Activated T-helper 2 cell treated with anti-CD3 and anti-CD28 coated beads, Interferon-gamma antibody, Interleukin-2, Interleukin-4, amounts not matched to agents 10 μg/mL and 5 μg/mL and 100 μg/mL, durations not matched to agents 14 hours and 24 hours and 36 hours (primary cell): ENCODE measurements at regions of chr4 and their contacts with region 1.

Region 1: DNA sequence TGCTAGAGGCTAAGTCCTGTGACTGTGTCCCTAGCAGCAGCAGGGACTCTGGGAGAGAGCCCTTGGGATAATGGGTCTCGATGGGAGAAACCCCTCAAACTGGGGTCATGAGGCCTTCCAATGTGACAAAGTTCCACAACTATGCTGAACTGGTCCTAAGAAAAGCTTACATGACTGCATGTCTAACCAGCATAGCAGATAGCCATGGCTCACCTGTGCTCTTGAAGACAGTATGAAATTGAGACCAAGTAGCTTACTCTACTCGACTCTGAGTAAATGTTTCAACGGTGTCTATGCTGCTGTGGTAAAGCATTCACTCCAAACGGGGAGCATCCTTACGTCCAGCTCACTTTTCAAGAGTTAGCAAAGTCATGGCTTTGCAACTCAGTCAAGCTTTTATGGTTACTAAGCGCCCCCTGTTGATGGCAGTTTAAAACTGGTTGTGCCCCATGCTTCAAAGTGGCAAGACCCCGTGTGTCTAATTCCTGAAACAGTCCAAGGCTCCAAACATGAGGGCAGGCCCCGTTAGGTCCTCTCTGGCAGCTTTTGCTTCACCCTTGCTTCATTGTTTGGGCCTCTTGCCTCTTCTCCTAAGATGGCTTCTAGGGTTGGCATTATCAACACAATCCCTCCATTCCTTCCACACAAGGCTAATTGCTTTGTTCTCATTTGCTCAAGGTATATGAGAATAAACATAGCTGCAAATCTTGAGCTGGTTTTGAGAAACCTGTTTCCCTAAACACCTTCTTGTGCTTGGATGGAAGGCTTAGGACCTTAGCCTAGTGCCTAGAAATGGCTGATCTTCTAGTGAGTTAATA is 46.6 kb downstream of the CCNG2 start:
- DNase-seq: peak; percentile 55
- H3K4me3 Mint-ChIP-seq: no peak overlapping the region
- H3K27ac Mint-ChIP-seq: no peak overlapping the region
- H3K4me1 Mint-ChIP-seq: peaks cover 21% of the 10 kb centered on the region
- H3K27me3 Mint-ChIP-seq: peaks cover 16% of the 10 kb centered on the region

Region 2: GRCh38 chr4:76515975-76516843 is 687.4 kb before region 1 on chr4:
- intact Hi-C with region 1: loop called (anchors 10 kb)
- DNase-seq: no peak
- H3K4me3 Mint-ChIP-seq: no peak overlapping the region
- H3K27ac Mint-ChIP-seq: no peak overlapping the region
- H3K4me1 Mint-ChIP-seq: no peaks in the 10 kb centered on the region
- H3K27me3 Mint-ChIP-seq: peaks cover 5% of the 10 kb centered on the region

Region 3: DNA sequence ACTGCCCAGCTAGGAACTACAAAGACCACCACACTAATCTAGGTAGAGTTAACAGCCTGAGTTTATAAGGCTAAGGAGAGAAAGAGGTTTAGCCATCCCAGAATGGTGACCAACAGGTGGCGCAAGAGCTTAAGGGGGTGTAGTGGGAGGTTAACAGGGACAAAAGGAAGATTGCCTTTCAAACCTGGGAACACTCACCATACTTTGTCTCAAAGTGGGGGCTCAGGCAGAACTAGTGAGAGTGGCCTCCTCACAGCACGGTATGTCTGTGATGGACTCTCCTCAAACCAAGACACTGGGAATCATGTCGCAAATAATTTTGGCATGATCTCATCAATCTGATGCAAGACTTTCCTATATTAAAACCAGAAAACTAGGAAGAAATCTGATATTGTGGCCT is 151.2 kb before region 1 on chr4:
- intact Hi-C with region 1: loop called (anchors 1 kb)
- DNase-seq: peak; percentile 26
- H3K4me3 Mint-ChIP-seq: no peak overlapping the region
- H3K27ac Mint-ChIP-seq: no peak overlapping the region
- H3K4me1 Mint-ChIP-seq: peaks cover 2% of the 10 kb centered on the region
- H3K27me3 Mint-ChIP-seq: no peaks in the 10 kb centered on the region

Region 4: DNA sequence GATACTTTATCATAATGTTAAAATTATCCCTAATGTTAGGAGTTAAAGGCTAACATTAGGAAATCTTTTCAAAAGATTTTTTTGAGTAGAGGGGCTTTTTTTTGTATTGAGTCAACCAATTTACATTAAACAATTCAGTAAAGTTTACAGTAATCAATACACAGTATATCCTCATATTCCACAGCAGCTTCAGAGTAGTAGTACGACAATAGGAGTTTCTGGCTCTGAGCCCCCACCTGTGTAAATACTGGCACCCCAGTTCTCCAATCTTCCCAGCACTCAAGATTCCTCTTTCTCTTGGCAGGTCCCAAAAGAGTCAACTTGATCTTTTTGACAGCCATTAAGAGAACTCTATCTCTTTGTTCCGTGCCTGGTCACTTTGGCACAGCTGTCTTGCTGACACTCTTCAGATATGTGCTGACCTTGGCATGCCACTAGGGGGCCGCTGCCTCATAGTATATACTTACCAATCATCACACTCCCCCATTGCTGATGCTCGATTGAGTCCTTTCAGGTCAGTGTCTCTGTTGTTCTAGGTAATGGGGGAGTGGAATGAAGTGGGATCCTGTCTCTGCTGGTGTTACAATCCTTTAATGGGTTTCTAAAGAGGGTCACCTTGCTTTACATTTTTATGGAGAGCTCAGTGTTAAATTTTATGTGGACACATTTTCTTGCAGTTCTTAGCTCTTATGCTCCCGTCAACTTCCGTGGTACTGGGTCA is 108.3 kb before region 1 on chr4:
- intact Hi-C with region 1: loop called (anchors 1 kb)
- DNase-seq: peak; percentile 55
- H3K4me3 Mint-ChIP-seq: no peak overlapping the region
- H3K27ac Mint-ChIP-seq: no peak overlapping the region
- H3K4me1 Mint-ChIP-seq: peaks cover 25% of the 10 kb centered on the region
- H3K27me3 Mint-ChIP-seq: peaks cover 6% of the 10 kb centered on the region